Esophagus muscularis mucosa (tissue), 4 donors: ENCODE measurements at regions of chr10 and their contacts with region 1.

Region 1: DNA sequence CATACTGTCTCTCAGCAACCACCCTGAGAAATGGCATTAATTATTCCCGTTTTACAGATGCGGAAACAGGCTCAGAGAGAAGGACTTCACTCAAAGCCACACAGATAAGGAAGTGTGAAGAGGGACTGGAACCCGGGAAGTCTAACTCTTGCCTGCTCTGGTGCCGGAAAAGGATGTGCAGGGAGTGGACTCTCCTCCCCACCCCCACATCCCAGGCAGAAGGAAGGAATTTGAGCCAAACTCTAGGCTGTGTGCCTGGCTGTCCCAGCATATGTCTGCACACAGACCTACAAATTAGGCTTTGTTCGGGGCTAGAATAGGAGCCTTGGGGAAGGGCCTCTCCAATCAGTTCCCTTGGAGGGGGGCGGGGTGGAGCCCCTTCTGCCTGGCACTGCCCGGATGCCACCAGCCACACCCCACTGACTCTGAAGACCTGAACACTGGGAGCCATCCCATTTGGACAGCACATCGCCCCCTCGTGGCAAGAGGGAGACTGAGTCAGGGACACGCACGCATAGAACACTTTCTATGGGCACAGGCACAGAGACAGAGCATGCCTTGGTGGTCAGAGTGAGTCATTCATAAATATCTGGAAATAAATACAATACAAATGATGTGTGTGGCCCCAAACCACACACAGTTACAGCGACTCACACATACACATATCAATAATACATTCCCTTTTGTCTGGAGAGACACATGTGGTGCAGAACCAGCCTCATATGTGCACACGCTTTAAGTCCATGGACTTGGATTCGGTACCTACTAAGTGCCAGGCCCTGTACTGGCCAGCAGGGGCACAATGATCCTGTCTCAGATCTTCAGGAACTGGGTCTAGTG is 13.1 kb downstream of the LZTS2 start:
- DNase-seq: no peak
- H3K4me3 ChIP-seq: peak overlapping the region in 1 of 4 donors; percentile 5
- H3K27ac ChIP-seq: peak overlapping the region; percentile 42 to 72 (median 58)
- H3K4me1 ChIP-seq: peaks cover 32 to 47% (median 45%) of the 10 kb centered on the region in 4 donors
- H3K27me3 ChIP-seq: peaks cover 0 to 22% (median 0%) of the 10 kb centered on the region in 4 donors
- CTCF ChIP-seq: peak; percentile 88 to 94 (median 90)
- EP300 ChIP-seq: no peak
- POLR2A ChIP-seq: no peak

Region 2: DNA sequence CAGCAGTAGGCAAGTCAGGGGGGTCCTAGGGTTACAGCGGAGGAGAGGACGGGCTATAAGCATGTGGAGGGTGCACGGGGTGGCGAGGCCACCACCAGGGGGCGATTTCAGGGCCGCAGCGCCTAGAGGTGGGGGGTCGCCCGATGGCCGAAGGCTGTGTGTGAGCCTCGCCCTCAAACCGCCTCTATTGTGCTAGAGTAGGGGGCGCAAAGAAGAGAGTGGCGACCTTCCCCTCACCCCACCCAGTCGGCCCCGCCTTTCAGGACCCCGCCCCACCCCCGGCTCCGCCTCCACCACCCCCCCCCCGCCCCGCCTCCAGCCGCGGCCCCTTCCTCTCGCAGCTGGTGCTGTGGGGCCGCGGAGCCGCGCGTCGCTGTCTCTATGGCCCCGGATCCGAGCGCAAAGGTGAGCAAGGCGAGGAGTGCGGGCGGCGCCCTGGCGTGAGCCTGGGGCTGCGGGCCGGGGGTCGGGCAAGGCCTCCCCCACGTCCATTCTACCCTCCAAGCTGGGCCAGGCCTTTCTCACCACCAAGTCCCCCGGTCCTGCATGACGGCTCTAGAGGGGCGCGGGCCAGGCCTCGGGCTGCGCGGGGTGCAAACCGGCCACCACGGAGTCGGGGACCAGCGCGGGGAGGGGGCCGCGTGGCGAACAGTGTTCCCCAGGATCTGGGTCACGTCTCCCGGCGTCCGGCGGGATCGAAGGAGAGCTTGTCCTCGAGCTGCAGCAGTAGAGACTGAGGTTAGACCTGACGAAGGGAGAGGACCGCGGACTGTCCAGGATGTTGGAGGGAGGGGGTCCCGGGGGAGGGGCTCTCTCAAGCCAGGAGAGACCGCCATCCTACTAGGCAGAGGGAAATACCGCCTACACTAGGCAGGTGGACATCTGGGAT is 43.3 kb before region 1 on chr10 and contains the start of gene SEMA4G:
- intact Hi-C with region 1: loop called (anchors 10 kb)
- DNase-seq: peak; percentile 90
- H3K4me3 ChIP-seq: peak within 1 kb of the TSS; percentile 53 to 73 (median 62)
- H3K27ac ChIP-seq: peak within 1 kb of the TSS in 1 of 4 donors; percentile 3
- H3K4me1 ChIP-seq: peaks cover 7 to 25% (median 19%) of the 10 kb centered on the region in 4 donors
- H3K27me3 ChIP-seq: peaks cover 0 to 5% (median 0%) of the 10 kb centered on the region in 4 donors
- CTCF ChIP-seq: peak; percentile 54 to 71 (median 60)
- EP300 ChIP-seq: no peak
- POLR2A ChIP-seq: no peak
- total RNA-seq, gene SEMA4G: 0.66 to 2.5 (median 1.4) TPM

Region 3: GRCh38 chr10:100997360-100998182 is 15.2 kb before region 1 on chr10:
- intact Hi-C with region 1: loop called (anchors 2 kb)
- DNase-seq: no peak
- H3K4me3 ChIP-seq: peak overlapping the region; percentile 79 to 93 (median 84)
- H3K27ac ChIP-seq: peak overlapping the region; percentile 98 to 100 (median 100)
- H3K4me1 ChIP-seq: peaks cover 30 to 53% (median 48%) of the 10 kb centered on the region in 4 donors
- H3K27me3 ChIP-seq: no peaks in the 10 kb centered on the region
- CTCF ChIP-seq: peak; percentile 89 to 92 (median 92)
- EP300 ChIP-seq: no peak
- POLR2A ChIP-seq: no peak